A673 (cell line): ENCODE measurements at regions of chr13 and their contacts with region 1.

Region 1: DNA sequence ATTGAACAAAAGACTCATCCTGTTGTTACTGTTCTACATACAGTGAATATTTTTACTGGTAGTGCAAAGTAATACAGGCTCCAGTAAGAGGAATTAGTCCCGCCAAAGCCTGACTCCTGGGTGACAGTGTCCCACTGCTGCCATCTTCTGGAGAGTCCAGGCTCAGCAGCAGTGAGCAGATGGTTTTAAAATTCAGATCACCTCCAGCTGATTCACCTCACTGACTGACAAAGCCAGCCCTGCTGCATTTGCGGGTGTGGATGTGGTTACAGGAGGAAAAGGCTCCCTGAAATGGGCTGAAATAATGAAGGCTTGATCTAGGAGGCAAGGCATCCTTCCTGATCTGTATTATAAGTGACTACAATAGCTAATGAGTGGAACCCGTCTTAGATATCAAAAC is 18.3 kb downstream of the PABPC3 start:
- DNase-seq: peak; percentile 88
- H3K4me3 ChIP-seq: no peak overlapping the region
- H3K27ac ChIP-seq: no peak overlapping the region
- H3K4me1 ChIP-seq: peaks cover 29% of the 10 kb centered on the region
- H3K27me3 ChIP-seq: no peaks in the 10 kb centered on the region
- CTCF ChIP-seq: peak; percentile 96

Region 2: DNA sequence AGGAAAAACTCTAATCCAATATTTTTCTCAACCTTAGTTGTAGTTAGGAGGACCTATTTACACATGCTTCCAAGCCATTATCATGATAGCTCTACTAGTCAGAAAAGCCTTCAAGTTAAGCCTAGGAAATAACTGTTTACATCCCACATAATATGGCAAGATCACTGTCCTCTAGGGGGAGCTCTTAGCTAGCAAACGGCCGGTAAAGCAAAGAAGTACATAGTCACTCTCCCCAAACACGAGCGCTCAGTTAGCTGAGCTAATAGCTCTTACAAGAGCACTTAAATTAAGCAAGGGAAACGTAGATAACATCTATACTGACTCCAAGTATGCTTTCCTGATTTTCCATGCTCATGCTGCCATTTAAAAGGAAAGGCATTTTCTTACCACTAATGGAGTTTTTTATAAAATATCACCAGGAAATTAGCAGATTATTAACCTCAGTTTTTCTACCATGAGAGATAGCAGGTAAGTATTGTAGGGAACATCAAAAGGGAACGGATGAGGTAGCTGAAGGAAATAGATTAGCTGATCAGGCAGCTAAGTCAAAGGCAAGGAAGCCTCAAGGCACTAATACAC is 118.9 kb before region 1 on chr13:
- CTCF ChIA-PET with region 1: interaction called, 11 read pairs
- POLR2A ChIA-PET with region 1: no interaction called
- intact Hi-C with region 1: no loop called
- DNase-seq: peak; percentile 92
- H3K4me3 ChIP-seq: no peak overlapping the region
- H3K27ac ChIP-seq: no peak overlapping the region
- H3K4me1 ChIP-seq: no peaks in the 10 kb centered on the region
- H3K27me3 ChIP-seq: no peaks in the 10 kb centered on the region
- CTCF ChIP-seq: peak; percentile 87

Region 3: DNA sequence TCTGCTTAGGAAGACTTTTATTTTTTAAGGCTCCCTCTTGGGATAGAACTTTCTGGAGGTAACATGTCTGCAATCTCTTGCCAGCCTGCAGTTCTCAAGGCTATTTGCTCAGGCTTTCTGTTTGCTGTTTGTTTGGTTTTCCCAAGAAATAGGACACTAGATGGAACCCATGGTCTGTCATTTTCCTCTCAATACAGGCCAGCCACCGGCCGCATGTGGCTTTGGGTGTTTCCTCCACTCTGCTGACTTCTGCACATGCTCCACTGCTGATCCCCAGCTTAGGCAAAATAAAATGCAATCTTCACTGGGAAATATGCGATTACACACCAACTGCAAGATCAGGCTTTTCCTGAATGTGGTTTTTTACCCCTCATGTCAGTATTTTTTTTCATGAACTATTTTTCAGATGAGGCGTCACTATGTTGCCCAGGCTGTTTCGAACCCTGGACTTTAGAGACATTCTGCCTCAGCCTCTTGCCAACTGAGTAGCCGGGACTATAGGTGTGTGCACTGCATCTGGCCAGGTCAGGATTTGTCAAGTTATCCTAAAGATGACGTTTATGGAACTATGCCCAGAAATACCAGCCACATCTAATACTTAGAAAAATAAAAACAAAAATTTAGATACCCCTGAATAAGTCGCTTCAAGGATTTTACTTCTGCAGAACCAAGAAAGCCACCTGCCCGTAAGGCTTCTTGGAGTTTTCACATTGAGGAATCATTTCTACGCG is 112.6 kb before region 1 on chr13:
- CTCF ChIA-PET with region 1: interaction called, 9 read pairs
- POLR2A ChIA-PET with region 1: no interaction called
- intact Hi-C with region 1: loop called (anchors 1 kb)
- DNase-seq: no peak
- H3K4me3 ChIP-seq: no peak overlapping the region
- H3K27ac ChIP-seq: no peak overlapping the region
- H3K4me1 ChIP-seq: no peaks in the 10 kb centered on the region
- H3K27me3 ChIP-seq: no peaks in the 10 kb centered on the region
- CTCF ChIP-seq: no peak

Region 4: DNA sequence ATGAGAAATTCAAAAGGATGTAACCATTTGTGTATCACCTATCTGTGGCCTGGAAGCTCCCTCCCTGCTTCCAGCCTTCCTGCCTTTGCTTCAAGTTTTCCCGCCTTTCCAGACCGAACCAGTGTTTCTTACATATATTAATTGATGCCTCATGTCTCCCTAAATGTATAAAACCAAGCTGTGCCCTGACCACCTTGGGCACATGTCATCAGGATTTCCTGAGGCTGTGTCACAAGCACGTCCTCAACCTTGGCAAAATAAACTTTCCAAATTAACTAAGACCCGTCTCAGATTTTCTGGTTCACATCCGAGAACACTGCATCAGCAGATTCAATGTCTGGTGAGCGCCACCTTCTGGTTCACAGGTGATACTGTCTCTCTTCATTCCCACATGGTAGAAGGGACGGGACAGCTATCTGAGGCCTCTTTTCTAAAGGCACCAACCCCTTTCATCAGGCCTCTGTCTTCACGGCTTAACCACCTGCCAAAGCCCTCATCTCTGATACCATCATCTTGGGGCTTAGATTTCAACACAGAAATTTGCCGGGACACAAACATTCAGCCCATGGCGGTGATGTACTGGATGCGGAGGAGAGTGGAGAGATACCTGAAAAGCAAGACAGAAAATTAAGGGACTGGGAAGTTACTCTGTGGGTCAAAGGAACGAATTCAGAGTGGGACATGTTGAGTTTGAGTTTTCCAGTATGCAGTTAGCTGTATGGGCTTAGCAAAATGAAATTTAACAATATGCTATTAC is 77.0 kb before region 1 on chr13:
- CTCF ChIA-PET with region 1: interaction called, 3 read pairs
- POLR2A ChIA-PET with region 1: no interaction called
- intact Hi-C with region 1: loop called (anchors 2 kb)
- DNase-seq: peak; percentile 75
- H3K4me3 ChIP-seq: no peak overlapping the region
- H3K27ac ChIP-seq: no peak overlapping the region
- H3K4me1 ChIP-seq: no peaks in the 10 kb centered on the region
- H3K27me3 ChIP-seq: no peaks in the 10 kb centered on the region
- CTCF ChIP-seq: peak; percentile 80

Region 5: GRCh38 chr13:25046985-25047511 is 67.2 kb before region 1 on chr13:
- CTCF ChIA-PET with region 1: interaction called, 11 read pairs
- POLR2A ChIA-PET with region 1: no interaction called
- intact Hi-C with region 1: no loop called
- DNase-seq: peak; percentile 56
- H3K4me3 ChIP-seq: peak overlapping the region; percentile 56
- H3K27ac ChIP-seq: no peak overlapping the region
- H3K4me1 ChIP-seq: no peaks in the 10 kb centered on the region
- H3K27me3 ChIP-seq: peaks cover 20% of the 10 kb centered on the region
- CTCF ChIP-seq: no peak

Region 6: GRCh38 chr13:25249001-25249543 is 134.9 kb after region 1 on chr13:
- CTCF ChIA-PET with region 1: no interaction called
- POLR2A ChIA-PET with region 1: no interaction called
- intact Hi-C with region 1: loop called (anchors 10 kb)
- DNase-seq: peak; percentile 80
- H3K4me3 ChIP-seq: no peak overlapping the region
- H3K27ac ChIP-seq: peak overlapping the region; percentile 50
- H3K4me1 ChIP-seq: peaks cover 22% of the 10 kb centered on the region
- H3K27me3 ChIP-seq: no peaks in the 10 kb centered on the region
- CTCF ChIP-seq: peak; percentile 80